CD8-positive, alpha-beta T cell (primary cell): ENCODE measurements at regions of chr2 and their contacts with region 1.

Region 1: DNA sequence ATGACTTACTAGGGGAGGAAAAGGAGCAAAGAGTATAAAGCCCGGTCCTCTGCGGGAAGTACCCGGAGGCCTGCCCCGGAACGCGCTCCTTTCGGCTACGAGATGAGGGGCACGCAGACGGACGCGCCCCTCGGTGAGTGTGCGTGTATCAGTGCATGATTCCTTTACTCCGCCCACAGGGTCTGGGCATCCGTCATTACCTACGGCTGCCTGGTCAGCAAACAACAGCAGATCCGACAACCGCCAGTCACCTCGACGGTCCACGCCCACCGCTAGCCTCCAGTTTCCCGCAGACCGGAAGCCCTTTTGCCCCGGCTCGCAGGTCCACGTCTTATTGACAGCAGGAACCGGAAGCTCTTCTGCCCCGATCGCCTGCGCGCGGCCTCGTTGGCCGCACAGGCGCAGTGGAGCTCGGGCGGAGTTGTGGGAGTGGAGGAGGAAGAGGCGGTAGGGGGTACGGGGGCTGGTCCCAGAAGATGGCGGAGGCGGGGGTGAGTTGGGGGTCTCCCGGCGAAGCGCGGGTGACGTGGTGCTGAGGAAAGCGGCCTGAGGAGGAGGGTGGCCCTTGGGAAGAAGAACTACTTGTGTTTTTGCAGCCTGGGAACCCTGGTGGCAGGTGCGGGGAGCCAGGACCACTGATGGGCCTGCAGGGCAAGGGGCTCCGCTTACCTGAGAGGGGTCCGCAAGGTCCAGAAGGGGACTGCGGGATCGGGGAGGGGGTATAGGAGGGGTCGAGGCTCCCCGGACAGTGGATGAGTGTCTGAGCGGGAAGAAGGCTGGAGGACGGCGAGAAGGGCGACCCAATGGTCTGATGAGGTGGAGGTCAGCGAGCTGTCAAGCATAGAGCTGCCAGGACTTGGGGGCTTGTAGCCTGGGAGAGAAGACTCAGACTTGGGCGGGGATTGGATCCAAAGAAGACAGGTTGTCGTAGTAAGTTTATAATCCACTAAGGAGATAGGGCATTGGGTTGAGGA is at the start of gene INSIG2:
- DNase-seq: peak; percentile 79 to 95 (median 86)
- ATAC-seq: peak; percentile 88
- H3K4me3 ChIP-seq: peak within 1 kb of the TSS; percentile 70 to 98
- H3K4me3 Mint-ChIP-seq: peak within 1 kb of the TSS; percentile 92
- H3K27ac ChIP-seq: peak within 1 kb of the TSS; percentile 80
- H3K27ac Mint-ChIP-seq: peak within 1 kb of the TSS; percentile 95
- H3K4me1 ChIP-seq: peaks cover 16% of the 10 kb centered on the region
- H3K4me1 Mint-ChIP-seq: peaks cover 34% of the 10 kb centered on the region
- H3K27me3 ChIP-seq: no peaks in the 10 kb centered on the region
- H3K27me3 Mint-ChIP-seq: peaks cover 4% of the 10 kb centered on the region
- CTCF ChIP-seq: no peak
- total RNA-seq, gene INSIG2: 10.9 to 11.8 TPM

Region 2: DNA sequence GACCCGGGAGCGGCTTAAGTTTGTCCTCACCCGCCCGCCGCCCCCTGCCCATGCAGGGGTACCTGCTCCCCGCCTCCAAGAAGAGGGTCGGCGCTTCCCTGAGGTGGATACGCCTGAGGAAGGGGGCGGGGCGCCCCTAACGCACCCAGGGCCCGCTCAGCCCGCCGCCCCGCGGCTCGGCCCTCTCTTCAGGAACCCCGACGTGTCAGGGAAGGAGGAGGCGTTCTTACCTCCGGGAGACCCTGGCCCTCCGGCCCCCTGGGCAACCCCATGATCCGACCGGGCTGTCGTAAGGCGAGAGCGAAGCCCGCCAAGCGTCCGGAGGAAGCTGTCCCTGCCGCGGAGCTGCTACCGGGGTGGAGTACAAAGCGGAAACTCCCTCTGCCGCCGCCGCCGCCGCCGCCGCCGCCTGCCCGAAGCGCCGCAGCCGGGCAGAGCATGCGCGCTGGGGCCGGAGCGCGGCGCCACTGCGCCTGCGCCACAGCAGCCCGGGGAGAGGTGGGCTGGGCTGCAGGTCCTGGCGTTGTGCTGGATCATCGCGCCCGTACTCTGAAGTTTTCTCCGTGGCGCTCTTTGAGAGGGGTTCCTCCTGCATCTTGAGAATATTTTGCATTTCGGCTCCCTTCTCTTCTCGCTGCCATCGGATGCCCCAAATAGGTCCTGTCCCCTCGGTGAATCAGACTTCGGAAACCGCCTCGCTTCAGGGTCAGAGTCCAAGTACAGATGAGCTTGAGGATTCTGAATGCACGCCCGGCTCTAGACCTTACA is 74.4 kb before region 1 on chr2 and contains the start of gene CCDC93:
- CTCF ChIA-PET with region 1: no interaction called
- POLR2A ChIA-PET with region 1: interaction called, 7 read pairs
- intact Hi-C with region 1: loop called (anchors 1 to 2 kb)
- DNase-seq: peak; percentile 73 to 94 (median 86)
- ATAC-seq: peak; percentile 85
- H3K4me3 ChIP-seq: peak within 1 kb of the TSS; percentile 73 to 88
- H3K4me3 Mint-ChIP-seq: peak within 1 kb of the TSS; percentile 95
- H3K27ac ChIP-seq: peak within 1 kb of the TSS; percentile 93 to 95
- H3K27ac Mint-ChIP-seq: peak within 1 kb of the TSS; percentile 92
- H3K4me1 ChIP-seq: peaks cover 27% of the 10 kb centered on the region
- H3K4me1 Mint-ChIP-seq: peaks cover 47% of the 10 kb centered on the region
- H3K27me3 ChIP-seq: no peaks in the 10 kb centered on the region
- H3K27me3 Mint-ChIP-seq: peaks cover 3% of the 10 kb centered on the region
- CTCF ChIP-seq: no peak
- total RNA-seq, gene CCDC93: 84.4 to 85.3 TPM

Region 3: GRCh38 chr2:118202707-118203303 is 114.5 kb after region 1 on chr2:
- CTCF ChIA-PET with region 1: no interaction called
- POLR2A ChIA-PET with region 1: no interaction called
- intact Hi-C with region 1: no loop called
- DNase-seq: peak in 8 of 9 experiments; percentile 24 to 71 (median 54)
- ATAC-seq: peak; percentile 92
- H3K4me3 ChIP-seq: no peak overlapping the region
- H3K4me3 Mint-ChIP-seq: peak overlapping the region; percentile 0
- H3K27ac ChIP-seq: no peak overlapping the region
- H3K27ac Mint-ChIP-seq: no peak overlapping the region
- H3K4me1 ChIP-seq: no peaks in the 10 kb centered on the region
- H3K4me1 Mint-ChIP-seq: peaks cover 5% of the 10 kb centered on the region
- H3K27me3 ChIP-seq: no peaks in the 10 kb centered on the region
- H3K27me3 Mint-ChIP-seq: peaks cover 26% of the 10 kb centered on the region
- CTCF ChIP-seq: peak; percentile 77